Right cardiac atrium (tissue), 5 donors: ENCODE measurements at regions of chr7 and their contacts with region 1.

Region 1: DNA sequence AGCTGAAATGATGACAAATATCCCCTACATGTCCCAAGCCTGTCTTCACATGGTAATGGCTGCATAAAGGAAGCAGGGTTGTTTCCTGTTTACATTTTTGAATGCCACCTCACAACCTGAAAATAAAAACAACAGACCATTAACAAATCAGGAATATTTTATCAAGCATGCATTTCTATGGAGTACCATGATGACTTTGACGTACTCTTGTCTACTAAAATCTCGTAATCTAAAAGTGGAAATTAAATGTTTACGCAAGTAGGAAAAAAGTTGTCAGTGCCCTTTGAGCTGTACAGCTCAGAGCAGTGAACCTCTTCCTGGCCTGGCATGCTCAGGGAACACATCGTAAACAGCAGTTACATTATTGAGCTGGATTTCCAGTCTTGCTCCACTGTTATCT is 194.1 kb downstream of the INHBA start:
- DNase-seq: no peak
- ATAC-seq: peak in 1 of 2 donors; percentile 56
- H3K4me3 ChIP-seq: no peak overlapping the region
- H3K27ac ChIP-seq: no peak overlapping the region
- H3K4me1 ChIP-seq: no peaks in the 10 kb centered on the region
- H3K27me3 ChIP-seq: no peaks in the 10 kb centered on the region

Region 2: GRCh38 chr7:41520445-41520844 is 11.7 kb after region 1 on chr7:
- intact Hi-C with region 1: loop called in 1 of 4 experiments (anchors 1 kb)
- DNase-seq: no peak
- ATAC-seq: no peak
- H3K4me3 ChIP-seq: no peak overlapping the region
- H3K27ac ChIP-seq: no peak overlapping the region
- H3K4me1 ChIP-seq: no peaks in the 10 kb centered on the region
- H3K27me3 ChIP-seq: no peaks in the 10 kb centered on the region